H1 (cell line): ENCODE measurements at regions of chr20 and their contacts with region 1.

Region 1: GRCh38 chr20:7031222-7031621 is 263.7 kb downstream of the BMP2 start:
- DNase-seq: no peak
- H3K4me3 ChIP-seq: no peak overlapping the region
- H3K27ac ChIP-seq: no peak overlapping the region
- H3K4me1 ChIP-seq: no peaks in the 10 kb centered on the region
- H3K27me3 ChIP-seq: no peaks in the 10 kb centered on the region
- CTCF ChIP-seq: peak in 2 of 3 experiments; percentile 44 to 61; a peak in 3 of 4 replicates
- EP300 ChIP-seq: no peak
- POLR2A ChIP-seq: no peak
- RAD21 ChIP-seq: peak; percentile 37 to 53; a peak in 3 of 4 replicates

Region 2: DNA sequence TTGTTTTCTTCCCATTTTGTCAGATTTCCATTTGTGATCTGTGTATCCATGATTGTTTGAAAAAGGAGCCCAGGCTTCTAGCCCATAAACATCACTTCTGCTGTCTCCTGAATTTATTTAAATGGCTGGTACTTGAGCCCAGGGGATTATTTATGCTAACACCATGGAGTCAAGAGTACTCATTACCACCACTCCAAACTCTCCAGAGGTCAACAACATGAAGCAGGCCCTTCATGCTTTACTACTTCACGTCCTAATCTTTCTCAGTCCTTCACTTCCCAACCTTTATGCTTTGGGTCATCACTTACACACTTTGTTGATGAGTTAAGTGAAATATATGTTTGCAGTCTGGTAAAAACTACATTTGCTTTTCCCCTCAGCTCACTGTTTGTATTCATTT is 16.0 kb before region 1 on chr20:
- CTCF ChIA-PET with region 1: interaction called, 11 read pairs
- POLR2A ChIA-PET with region 1: no interaction called
- DNase-seq: no peak
- H3K4me3 ChIP-seq: no peak overlapping the region
- H3K27ac ChIP-seq: no peak overlapping the region
- H3K4me1 ChIP-seq: no peaks in the 10 kb centered on the region
- H3K27me3 ChIP-seq: no peaks in the 10 kb centered on the region
- CTCF ChIP-seq: no peak
- EP300 ChIP-seq: no peak
- POLR2A ChIP-seq: no peak
- RAD21 ChIP-seq: no peak